HEK293T (cell line): ENCODE measurements at regions of chr1 and their contacts with region 1.

Region 1: DNA sequence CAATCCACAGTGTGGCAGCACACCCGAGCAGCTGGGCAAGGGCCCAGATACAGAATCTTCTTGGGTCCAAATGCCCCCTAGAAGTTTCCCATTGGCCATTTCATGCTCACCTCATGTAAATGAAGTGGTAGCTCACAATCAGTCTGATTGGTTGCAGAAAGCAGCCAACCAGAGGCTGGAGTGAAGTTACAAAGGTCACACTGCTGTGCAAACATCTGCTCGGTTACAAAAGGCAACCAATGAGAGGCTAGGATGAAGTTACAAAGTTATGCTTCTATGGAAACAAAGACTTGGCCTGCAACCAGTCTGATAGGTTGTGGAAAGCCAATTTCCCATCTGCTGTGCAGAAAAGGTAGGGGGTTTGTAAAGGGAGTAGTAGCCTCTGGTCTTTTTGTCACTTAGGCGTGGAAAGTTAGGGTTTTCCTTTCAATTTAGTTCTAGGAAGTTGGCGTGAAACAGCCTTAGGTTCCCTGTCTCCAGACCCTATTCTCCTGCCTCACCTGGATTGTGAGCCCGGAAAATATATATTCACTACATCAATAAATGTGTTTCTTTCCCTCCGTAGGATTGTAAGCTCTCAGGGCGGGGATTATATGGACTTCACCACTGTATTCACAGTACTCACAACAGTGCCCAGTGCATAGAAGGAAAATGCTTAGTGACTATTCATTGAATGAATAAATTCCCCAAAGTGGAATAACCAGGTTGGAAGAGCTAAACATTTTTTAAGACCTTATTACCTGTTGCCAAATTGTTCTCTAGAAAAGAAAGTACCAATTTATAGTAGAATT is 91.9 kb downstream of the URB2 start:
- DNase-seq: no peak

Region 2: GRCh38 chr1:229547542-229547941 is 170.4 kb before region 1 on chr1:
- CTCF ChIA-PET with region 1: no interaction called
- POLR2A ChIA-PET with region 1: no interaction called
- DNase-seq: no peak

Region 3: GRCh38 chr1:229665912-229666558 is 51.9 kb before region 1 on chr1:
- CTCF ChIA-PET with region 1: interaction called, 11 read pairs
- POLR2A ChIA-PET with region 1: no interaction called
- DNase-seq: peak; percentile 6

Region 4: DNA sequence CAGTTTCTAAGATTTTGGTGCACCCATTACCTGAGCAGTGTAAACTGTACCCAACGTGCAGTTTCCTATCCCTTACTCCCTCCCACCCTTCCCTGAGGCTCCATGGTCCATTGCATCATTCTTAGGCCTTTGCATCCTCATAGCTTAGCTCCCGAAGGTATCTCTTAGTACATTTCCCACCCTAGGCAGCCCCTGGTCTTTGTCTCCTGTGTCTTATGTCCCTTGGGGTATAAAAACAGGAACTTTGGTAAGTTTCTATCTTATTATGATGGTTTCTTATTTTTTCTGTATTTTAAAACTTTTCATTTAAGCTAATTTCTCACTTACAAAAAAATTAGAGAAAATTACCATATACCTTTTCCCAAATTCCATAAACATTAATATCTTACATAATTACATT is 13.8 kb before region 1 on chr1:
- CTCF ChIA-PET with region 1: no interaction called
- POLR2A ChIA-PET with region 1: no interaction called
- DNase-seq: no peak